Activated T-helper 1 cell treated with anti-CD3 and anti-CD28 coated beads, Interleukin-12 subunit alpha, Interleukin-12 subunit beta, Interleukin-2, Interleukin-4 antibody, amounts not matched to agents 30 ng/mL and 10 ng/mL and 1 ng/mL, durations not matched to agents 14 hours and 24 hours and 36 hours (primary cell): ENCODE measurements at regions of chr7 and their contacts with region 1.

Region 1: GRCh38 chr7:42869131-42870020 is 42.5 kb downstream of the C7orf25 start:
- DNase-seq: peak; percentile 19
- H3K4me3 Mint-ChIP-seq: peak overlapping the region; percentile 19
- H3K27ac Mint-ChIP-seq: peak overlapping the region; percentile 88
- H3K4me1 Mint-ChIP-seq: peaks cover 24% of the 10 kb centered on the region
- H3K27me3 Mint-ChIP-seq: peaks cover 2% of the 10 kb centered on the region

Region 2: DNA sequence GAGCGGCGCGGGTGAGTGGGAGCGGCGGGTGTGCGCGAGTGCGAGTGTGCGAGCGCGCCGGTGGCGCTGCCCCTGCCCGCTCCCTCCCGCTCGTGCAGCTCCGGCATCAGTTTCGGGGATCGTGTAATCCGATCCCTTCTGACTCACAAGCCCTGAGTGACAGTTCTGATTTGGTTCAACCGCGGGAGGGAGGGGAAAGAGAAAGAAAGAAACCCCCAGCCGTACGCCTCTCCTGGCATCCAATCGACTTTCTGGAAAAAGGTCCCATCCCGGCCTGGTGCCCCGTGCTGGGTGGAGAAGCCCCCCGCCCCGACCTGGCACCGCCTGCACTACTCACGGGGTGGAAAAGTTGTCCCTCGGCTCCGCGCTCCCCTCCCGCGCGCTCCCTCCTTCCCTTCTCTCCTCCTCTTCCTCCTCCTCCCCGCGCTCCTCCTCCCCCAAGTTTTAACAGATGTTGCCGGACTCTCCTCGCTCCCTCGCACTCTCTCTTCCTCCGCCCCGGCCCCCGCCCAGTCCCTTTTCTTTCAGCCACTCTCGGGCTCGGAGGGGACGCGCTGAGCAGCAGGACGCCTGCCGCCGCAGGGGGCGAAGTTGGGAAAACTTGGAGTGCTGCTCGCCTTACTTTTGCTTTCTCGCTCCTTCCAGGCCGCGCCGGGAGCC is 632.1 kb before region 1 on chr7 and contains the start of gene GLI3:
- intact Hi-C with region 1: loop called (anchors 10 kb)
- DNase-seq: no peak
- H3K4me3 Mint-ChIP-seq: peak within 1 kb of the TSS; percentile 80
- H3K27ac Mint-ChIP-seq: no peak within 1 kb of the TSS
- H3K4me1 Mint-ChIP-seq: no peaks in the 10 kb centered on the region
- H3K27me3 Mint-ChIP-seq: peaks cover 66% of the 10 kb centered on the region
- total RNA-seq, gene GLI3: not detected in 2 replicates

Region 3: DNA sequence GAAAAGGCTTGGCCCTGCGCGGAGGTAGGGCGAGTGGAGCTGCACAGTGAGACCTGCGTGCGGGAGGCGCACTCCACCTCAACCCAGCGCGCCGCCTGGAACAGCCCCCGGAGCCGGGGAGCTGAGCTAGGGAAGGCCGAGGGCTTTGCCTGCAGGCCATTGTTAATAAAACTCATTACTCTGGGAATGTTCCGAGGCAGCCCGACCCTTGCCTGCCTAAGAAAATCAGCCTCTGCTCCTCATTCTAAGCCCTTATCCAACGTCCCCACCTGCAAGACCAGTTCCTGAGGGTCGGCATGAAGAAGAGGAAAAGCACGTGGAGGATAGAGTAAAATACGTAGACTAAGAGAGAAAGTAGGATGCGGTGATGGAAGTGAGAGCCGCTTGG is 12.8 kb before region 1 on chr7:
- intact Hi-C with region 1: loop called (anchors 1 kb)
- DNase-seq: no peak
- H3K4me3 Mint-ChIP-seq: peak overlapping the region; percentile 76
- H3K27ac Mint-ChIP-seq: peak overlapping the region; percentile 59
- H3K4me1 Mint-ChIP-seq: peaks cover 11% of the 10 kb centered on the region
- H3K27me3 Mint-ChIP-seq: peaks cover 44% of the 10 kb centered on the region

Region 4: DNA sequence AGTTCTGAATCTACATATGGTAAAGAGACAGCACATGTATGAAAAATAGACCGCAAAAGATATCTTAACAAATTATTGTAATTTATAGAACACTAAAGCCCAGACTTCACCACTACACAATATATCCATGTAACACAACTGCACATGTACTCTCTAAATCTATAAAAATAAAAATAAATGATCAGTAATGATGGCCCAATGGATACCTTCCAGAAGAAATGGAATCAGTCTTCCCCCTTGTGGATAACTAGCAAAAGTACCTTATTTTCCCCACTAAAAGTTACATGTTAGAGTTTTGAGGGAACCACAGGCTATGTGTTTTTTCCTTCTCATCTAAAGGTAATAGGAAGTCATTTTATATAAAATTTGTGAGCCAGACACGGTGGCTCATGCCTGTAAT is 16.8 kb after region 1 on chr7:
- intact Hi-C with region 1: loop called (anchors 1 kb)
- DNase-seq: no peak
- H3K4me3 Mint-ChIP-seq: no peak overlapping the region
- H3K27ac Mint-ChIP-seq: no peak overlapping the region
- H3K4me1 Mint-ChIP-seq: peaks cover 25% of the 10 kb centered on the region
- H3K27me3 Mint-ChIP-seq: peaks cover 7% of the 10 kb centered on the region

Region 5: GRCh38 chr7:42911454-42912447 is 42.4 kb after region 1 on chr7 and contains the start of gene C7orf25:
- intact Hi-C with region 1: loop called (anchors 1 kb)
- DNase-seq: peak; percentile 93
- H3K4me3 Mint-ChIP-seq: peak within 1 kb of the TSS; percentile 90
- H3K27ac Mint-ChIP-seq: peak within 1 kb of the TSS; percentile 80
- H3K4me1 Mint-ChIP-seq: peaks cover 86% of the 10 kb centered on the region
- H3K27me3 Mint-ChIP-seq: no peaks in the 10 kb centered on the region
- total RNA-seq, gene C7orf25: 5.7 and 6.1 TPM in 2 replicates

Region 6: GRCh38 chr7:43314379-43315189 is 445.2 kb after region 1 on chr7:
- intact Hi-C with region 1: loop called (anchors 1 kb)
- DNase-seq: no peak
- H3K4me3 Mint-ChIP-seq: no peak overlapping the region
- H3K27ac Mint-ChIP-seq: peak overlapping the region; percentile 51
- H3K4me1 Mint-ChIP-seq: peaks cover 14% of the 10 kb centered on the region
- H3K27me3 Mint-ChIP-seq: no peaks in the 10 kb centered on the region